Activated B cell treated with CpG ODN at 0.5 μM for 24 hours (primary cell): ENCODE measurements at regions of chr11 and their contacts with region 1.

Region 1: GRCh38 chr11:304915-305843 is 2.4 kb upstream of the IFITM2 start:
- DNase-seq: no peak
- ATAC-seq: peak; percentile 28
- H3K4me3 Mint-ChIP-seq: no peak overlapping the region
- H3K27ac Mint-ChIP-seq: peak overlapping the region; percentile 35
- H3K4me1 Mint-ChIP-seq: peaks cover 55% of the 10 kb centered on the region
- H3K27me3 Mint-ChIP-seq: no peaks in the 10 kb centered on the region
- CTCF ChIP-seq: no peak

Region 2: GRCh38 chr11:250740-251299 is 54.4 kb before region 1 on chr11:
- CTCF ChIA-PET with region 1: interaction called, 25 read pairs
- POLR2A ChIA-PET with region 1: interaction called, 9 read pairs
- intact Hi-C with region 1: no loop called
- DNase-seq: peak; percentile 60
- ATAC-seq: peak; percentile 96
- H3K4me3 Mint-ChIP-seq: no peak overlapping the region
- H3K27ac Mint-ChIP-seq: peak overlapping the region; percentile 36
- H3K4me1 Mint-ChIP-seq: peaks cover 2% of the 10 kb centered on the region
- H3K27me3 Mint-ChIP-seq: no peaks in the 10 kb centered on the region
- CTCF ChIP-seq: peak; percentile 29

Region 3: DNA sequence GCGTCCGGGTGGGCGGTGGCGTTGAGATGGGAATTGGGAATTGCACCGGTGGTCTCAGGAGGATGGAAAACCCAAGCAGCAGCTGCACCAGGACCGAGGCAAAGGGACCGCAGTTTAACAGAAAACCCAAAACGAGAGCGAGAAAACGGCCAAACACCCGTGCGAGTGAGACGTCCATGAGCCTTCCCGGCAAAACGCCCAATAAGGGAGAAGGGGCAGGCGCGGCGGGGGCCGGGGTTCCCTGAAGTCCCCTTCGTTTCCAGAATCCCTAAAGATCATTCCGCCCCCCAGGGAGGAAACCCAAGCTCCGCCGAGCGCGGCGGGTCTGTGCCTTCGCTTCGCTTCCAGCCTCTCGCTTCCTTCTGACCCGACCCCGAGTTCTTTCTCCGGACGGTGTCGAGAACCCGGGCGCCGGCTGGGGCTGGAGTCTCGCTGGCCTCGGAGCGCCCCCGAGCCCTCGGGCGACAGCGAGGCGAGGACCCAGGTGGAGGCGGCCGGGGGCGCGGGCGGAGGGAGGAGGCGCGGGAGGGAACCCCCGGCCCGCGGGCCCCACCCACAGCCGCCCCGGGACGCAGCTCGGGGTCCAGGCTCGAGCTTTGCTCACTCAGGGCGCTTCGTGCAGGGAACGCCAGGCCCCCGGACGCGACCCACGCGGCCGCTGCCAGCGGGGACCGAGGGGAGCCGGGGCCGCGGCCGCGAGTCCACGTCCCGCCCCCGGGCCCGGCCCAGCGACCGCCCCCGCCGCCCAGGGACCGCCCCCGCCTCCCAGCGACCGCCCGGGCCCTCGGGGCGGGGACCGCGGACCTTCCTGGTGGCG is 16.6 kb before region 1 on chr11 and contains the start of gene PGGHG:
- CTCF ChIA-PET with region 1: no interaction called
- POLR2A ChIA-PET with region 1: interaction called, 6 read pairs
- intact Hi-C with region 1: loop called (anchors 2 kb)
- DNase-seq: peak; percentile 78
- ATAC-seq: peak; percentile 88
- H3K4me3 Mint-ChIP-seq: peak within 1 kb of the TSS; percentile 82
- H3K27ac Mint-ChIP-seq: peak within 1 kb of the TSS; percentile 41
- H3K4me1 Mint-ChIP-seq: peaks cover 17% of the 10 kb centered on the region
- H3K27me3 Mint-ChIP-seq: peaks cover 12% of the 10 kb centered on the region
- CTCF ChIP-seq: no peak
- total RNA-seq, gene PGGHG: 62.3 and 74.1 TPM in 2 replicates

Region 4: GRCh38 chr11:447923-448731 is 142.9 kb after region 1 on chr11:
- CTCF ChIA-PET with region 1: no interaction called
- POLR2A ChIA-PET with region 1: interaction called, 3 read pairs
- intact Hi-C with region 1: loop called (anchors 5 kb)
- DNase-seq: peak; percentile 97
- ATAC-seq: peak; percentile 75
- H3K4me3 Mint-ChIP-seq: peak overlapping the region; percentile 94
- H3K27ac Mint-ChIP-seq: peak overlapping the region; percentile 95
- H3K4me1 Mint-ChIP-seq: peaks cover 34% of the 10 kb centered on the region
- H3K27me3 Mint-ChIP-seq: no peaks in the 10 kb centered on the region
- CTCF ChIP-seq: no peak